Mammary epithelial cell (primary cell): ENCODE measurements at regions of chr17 and their contacts with region 1.

Region 1: GRCh38 chr17:38922538-38923297 is 2.7 kb upstream of the LASP1NB start:
- DNase-seq: peak; percentile 15
- H3K4me3 ChIP-seq: no peak overlapping the region
- H3K27ac ChIP-seq: no peak overlapping the region
- H3K4me1 ChIP-seq: no peaks in the 10 kb centered on the region
- H3K27me3 ChIP-seq: no peaks in the 10 kb centered on the region
- CTCF ChIP-seq: peak in 1 of 2 donors; percentile 0

Region 2: DNA sequence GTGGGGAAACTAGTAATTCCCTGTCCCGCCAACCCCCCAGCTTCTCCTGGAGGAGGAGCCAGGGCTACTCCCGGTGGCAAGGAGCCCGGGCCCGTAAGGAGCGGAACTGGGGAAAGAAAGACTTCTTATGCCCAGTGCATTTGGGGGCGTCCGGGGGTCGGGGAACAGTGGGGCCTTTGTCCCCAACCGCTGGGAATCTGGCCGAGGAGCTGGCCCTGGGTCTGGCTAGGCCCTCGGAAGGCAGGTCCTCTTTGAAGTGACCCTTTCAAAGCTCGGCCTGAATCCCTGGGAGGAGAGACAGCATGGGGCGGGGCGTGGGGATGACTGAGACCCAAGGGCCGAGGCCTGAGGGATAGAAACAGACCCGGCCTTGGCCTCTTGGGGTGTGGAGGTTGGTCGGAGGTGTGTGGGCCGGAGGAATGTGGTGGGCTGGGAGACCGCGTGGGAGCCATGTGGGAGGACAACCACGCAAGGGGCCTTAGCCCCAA is 488.5 kb before region 1 on chr17:
- CTCF ChIA-PET with region 1: no interaction called
- dilution Hi-C with region 1: no loop called
- in situ Hi-C with region 1: no loop called
- intact Hi-C with region 1: no loop called
- DNase-seq: no peak
- H3K4me3 ChIP-seq: no peak overlapping the region
- H3K27ac ChIP-seq: no peak overlapping the region
- H3K4me1 ChIP-seq: peaks cover 3% of the 10 kb centered on the region
- H3K27me3 ChIP-seq: no peaks in the 10 kb centered on the region
- CTCF ChIP-seq: no peak

Region 3: GRCh38 chr17:38970128-38970527 is 47.4 kb after region 1 on chr17:
- CTCF ChIA-PET with region 1: no interaction called
- dilution Hi-C with region 1: loop called (anchors 10 kb)
- in situ Hi-C with region 1: no loop called
- intact Hi-C with region 1: no loop called
- DNase-seq: no peak
- H3K4me3 ChIP-seq: no peak overlapping the region
- H3K27ac ChIP-seq: no peak overlapping the region
- H3K4me1 ChIP-seq: no peaks in the 10 kb centered on the region
- H3K27me3 ChIP-seq: no peaks in the 10 kb centered on the region
- CTCF ChIP-seq: peak in 1 of 2 donors; percentile 20

Region 4: DNA sequence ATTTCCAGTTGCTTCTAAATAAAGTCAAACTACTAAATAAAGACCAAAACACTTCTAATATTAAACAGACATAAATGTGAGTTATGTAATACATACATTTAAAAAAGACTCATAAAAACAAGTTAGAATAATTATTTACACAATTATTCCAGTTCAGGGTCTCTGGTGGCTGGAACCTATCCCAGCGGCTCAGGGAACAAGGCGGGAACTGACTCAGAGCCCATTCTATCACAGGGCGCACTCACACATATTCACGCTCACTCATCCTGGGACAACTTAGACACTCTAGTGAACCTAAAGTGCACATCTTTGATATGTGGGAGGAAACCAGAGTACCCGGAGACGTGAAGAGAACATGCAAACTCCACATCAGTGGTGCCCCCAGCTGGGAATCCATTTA is 203.7 kb after region 1 on chr17:
- CTCF ChIA-PET with region 1: no interaction called
- dilution Hi-C with region 1: loop called (anchors 5 kb)
- in situ Hi-C with region 1: no loop called
- intact Hi-C with region 1: no loop called
- DNase-seq: no peak
- H3K4me3 ChIP-seq: no peak overlapping the region
- H3K27ac ChIP-seq: no peak overlapping the region
- H3K4me1 ChIP-seq: no peaks in the 10 kb centered on the region
- H3K27me3 ChIP-seq: no peaks in the 10 kb centered on the region
- CTCF ChIP-seq: no peak